ENCODE measurements at regions of chrX and their contacts with region 1.

Region 1: GRCh38 chrX:123993326-123993725 is 31.8 kb downstream of the STAG2 start:
- DNase-seq: no peak
- H3K4me3 ChIP-seq: no peak overlapping the region
- H3K27ac ChIP-seq: no peak overlapping the region
- H3K4me1 ChIP-seq: no peaks in the 10 kb centered on the region
- H3K27me3 ChIP-seq: no peaks in the 10 kb centered on the region
- CTCF ChIP-seq: no peak
- POLR2A ChIP-seq: no peak

Region 2: DNA sequence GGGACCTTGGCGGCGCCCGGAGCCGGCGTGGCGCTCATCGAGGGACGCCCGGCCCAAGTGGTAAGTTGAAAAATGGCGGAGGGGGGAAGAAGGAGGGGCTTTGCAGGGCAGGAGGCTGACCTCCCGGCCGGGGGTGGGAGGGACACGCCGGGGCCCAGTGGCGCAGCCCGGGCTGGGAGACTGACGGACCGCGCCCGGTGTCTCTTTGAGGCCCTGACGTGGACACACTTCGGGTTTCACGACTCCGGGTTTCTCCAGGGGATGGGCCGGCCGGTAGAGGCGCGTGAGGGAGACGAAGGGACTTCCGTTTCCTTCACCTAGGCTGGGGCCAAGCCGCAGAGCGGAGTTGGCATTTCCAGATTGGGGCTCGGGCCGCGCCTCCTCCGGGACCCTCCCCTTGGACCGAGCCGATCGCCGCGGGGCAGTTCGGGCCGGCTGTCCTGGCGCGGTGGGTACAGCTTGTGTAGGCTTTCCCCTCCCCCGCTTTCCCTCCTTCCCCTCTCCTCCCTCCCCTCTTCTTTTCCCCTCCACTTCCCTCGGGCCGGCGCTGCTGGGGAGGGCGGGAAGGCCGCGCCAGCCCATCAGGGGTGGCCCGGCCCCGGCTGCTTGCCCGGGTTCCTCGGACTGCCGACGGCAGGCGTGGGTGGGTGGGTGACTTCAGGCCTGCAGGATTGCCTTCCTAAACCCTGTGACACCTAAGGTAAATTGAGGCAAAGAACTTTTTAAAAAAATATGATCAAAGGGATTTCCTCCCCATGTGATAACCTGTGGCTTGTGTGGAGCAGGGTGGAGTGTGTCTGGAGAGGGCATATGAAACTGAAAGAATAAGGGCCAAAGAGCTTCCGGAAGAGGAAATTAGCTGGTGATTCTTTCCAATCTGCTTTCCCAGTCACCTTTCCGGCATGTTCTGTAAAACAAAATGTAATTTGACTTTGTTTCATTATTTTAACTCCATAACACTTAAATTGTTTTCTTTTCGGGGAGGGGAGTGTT is 133.2 kb before region 1 on chrX and contains the start of gene XIAP:
- intact Hi-C with region 1: loop called (anchors 10 kb)
- DNase-seq: peak; percentile 75 to 76
- H3K4me3 ChIP-seq: peak within 1 kb of the TSS; percentile 65 to 78 (median 66)
- H3K27ac ChIP-seq: peak within 1 kb of the TSS; percentile 97 to 98
- H3K4me1 ChIP-seq: no peaks in the 10 kb centered on the region
- H3K27me3 ChIP-seq: peaks cover 0 to 3% of the 10 kb centered on the region in 2 donors
- CTCF ChIP-seq: no peak
- POLR2A ChIP-seq: peak; percentile 32
- total RNA-seq, gene XIAP: 38.7 to 47.6 (median 44.2) TPM

Region 3: DNA sequence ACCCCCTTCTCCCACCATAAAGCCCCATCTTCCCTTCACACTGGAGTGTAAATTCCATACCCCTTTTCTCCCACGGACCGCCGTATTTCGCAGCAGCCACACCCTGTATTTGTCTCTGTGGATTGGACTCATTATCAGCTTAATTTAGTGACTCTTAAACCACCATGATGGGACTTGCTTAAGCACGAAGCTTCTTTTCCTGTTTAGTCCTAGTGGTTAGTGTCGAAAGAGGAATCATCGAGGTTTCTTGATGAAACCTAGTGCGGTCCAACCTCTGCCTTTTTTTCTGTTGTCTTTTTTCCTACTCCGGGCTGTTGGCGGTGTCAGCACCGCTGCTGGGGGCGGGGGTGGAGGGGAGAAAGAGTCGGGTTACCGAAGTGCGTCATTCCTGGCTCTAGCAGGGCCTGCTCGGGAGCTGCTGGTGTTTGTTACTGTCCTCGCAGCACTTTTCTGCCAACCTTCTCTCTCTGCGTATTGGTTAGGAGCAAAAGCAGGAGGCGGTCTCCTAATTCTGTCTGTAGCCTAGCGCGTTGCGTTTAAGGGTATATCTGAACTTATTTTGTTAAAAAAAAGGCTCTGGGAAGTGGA is 30.4 kb before region 1 on chrX:
- intact Hi-C with region 1: no loop called
- DNase-seq: peak; percentile 86 to 92
- H3K4me3 ChIP-seq: peak overlapping the region; percentile 69 to 85 (median 74)
- H3K27ac ChIP-seq: peak overlapping the region; percentile 98 to 99
- H3K4me1 ChIP-seq: no peaks in the 10 kb centered on the region
- H3K27me3 ChIP-seq: no peaks in the 10 kb centered on the region
- CTCF ChIP-seq: no peak
- POLR2A ChIP-seq: peak; percentile 47

Region 4: DNA sequence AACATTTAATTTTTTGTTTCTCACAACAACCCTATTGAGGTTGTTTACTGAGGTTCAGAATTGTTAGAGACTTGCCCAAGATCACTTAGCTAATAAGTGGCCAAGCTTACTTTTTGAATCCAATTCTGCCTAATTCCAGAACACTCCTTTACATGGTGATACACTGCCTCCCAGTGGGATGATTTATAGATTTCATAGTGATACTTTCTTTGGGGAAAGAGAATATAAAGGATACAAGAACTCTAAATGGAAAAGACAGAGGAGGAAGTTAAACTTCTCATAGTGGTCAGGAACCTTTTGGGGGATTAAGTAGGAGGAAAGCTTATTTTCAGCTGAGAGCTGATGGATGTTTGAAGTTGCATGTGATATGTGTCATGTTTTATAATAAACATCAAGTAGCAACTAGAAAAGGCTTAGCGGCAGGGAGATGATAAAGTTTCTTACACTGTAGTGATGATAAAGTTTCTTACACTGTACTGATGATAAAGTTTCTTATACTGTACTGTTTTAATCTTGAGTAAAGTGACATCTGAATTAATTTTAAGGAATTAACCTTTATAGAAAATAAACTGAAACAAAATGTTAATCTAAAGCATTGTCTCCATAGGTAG is 16.5 kb before region 1 on chrX:
- intact Hi-C with region 1: no loop called
- DNase-seq: no peak
- H3K4me3 ChIP-seq: no peak overlapping the region
- H3K27ac ChIP-seq: no peak overlapping the region
- H3K4me1 ChIP-seq: no peaks in the 10 kb centered on the region
- H3K27me3 ChIP-seq: no peaks in the 10 kb centered on the region
- CTCF ChIP-seq: no peak
- POLR2A ChIP-seq: no peak